ENCODE measurements at regions of chr5 and their contacts with region 1.

Region 1: DNA sequence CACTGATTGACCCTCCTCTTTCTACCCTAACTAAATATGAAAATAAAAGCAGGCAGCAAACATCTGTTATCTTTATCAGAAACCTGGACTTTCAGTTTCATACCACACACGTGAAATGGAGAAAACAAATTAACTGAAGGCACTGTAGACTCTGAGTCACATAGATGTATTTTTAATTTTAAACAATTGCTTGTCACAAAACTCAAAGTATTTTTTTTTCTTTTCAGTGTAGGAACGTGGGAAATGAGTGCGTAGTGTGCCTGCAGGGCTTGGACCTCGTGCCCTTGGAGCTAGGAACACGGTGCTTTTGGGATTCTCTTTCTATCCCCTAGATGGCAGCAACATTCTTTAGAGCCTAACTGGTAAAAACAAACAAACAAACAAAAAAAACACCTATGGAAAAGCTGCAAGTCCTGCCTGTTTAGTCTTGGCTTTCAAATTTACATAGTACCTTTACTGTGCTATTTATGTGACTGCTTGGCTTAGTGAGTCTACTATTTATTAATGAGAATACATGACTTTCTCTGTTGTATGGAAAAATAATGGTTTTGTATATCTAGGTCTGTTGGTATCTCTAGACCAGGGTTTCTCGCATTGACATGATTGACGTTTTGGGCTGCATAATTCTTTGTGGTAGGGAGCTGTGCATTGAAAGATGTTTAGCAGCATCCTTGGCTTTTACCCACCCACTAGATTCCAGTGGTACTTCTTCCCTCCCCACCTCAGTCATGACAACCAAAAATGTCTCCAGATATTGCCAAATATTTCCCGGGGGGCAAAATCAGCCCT is 16.8 kb upstream of the ACTBL2 start:
- DNase-seq: peak; percentile 94
- H3K4me3 ChIP-seq: no peak overlapping the region
- H3K27ac ChIP-seq: no peak overlapping the region
- H3K4me1 ChIP-seq: peaks cover 37% of the 10 kb centered on the region
- H3K27me3 ChIP-seq: no peaks in the 10 kb centered on the region
- CTCF ChIP-seq: peak; percentile 62 to 66
- POLR2A ChIP-seq: no peak

Region 2: GRCh38 chr5:57338068-57338892 is 161.2 kb before region 1 on chr5:
- CTCF ChIA-PET with region 1: interaction called, 10 read pairs
- POLR2A ChIA-PET with region 1: no interaction called
- dilution Hi-C with region 1: no loop called
- intact Hi-C with region 1: loop called (anchors 1 kb)
- DNase-seq: peak; percentile 36
- H3K4me3 ChIP-seq: no peak overlapping the region
- H3K27ac ChIP-seq: no peak overlapping the region
- H3K4me1 ChIP-seq: peaks cover 13% of the 10 kb centered on the region
- H3K27me3 ChIP-seq: no peaks in the 10 kb centered on the region
- CTCF ChIP-seq: peak; percentile 27 to 44
- POLR2A ChIP-seq: no peak

Region 3: DNA sequence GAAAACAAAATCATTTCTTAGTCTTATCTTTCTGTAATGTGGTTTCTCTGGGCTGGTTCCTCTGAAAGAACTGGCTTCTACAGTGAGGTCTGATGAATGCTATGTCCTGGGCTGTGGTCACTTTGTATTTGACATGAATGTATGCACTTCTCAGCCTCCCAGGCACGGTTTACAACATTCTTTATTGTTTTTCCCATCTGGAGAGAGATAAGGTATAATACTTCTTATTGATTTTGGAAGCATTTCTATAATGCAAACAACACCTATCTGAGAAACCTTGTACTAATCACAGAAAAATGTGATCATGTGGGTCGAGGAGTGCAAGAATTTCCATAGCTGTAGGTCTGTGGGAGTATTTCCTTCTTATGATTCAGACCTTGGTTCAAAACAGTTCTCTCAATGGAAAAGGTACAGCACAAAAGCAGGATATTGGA is 63.7 kb before region 1 on chr5:
- CTCF ChIA-PET with region 1: interaction called, 13 read pairs
- POLR2A ChIA-PET with region 1: no interaction called
- dilution Hi-C with region 1: no loop called
- intact Hi-C with region 1: loop called (anchors 1 kb)
- DNase-seq: peak; percentile 99
- H3K4me3 ChIP-seq: no peak overlapping the region
- H3K27ac ChIP-seq: peak overlapping the region; percentile 98
- H3K4me1 ChIP-seq: peaks cover 71% of the 10 kb centered on the region
- H3K27me3 ChIP-seq: no peaks in the 10 kb centered on the region
- CTCF ChIP-seq: no peak
- POLR2A ChIP-seq: peak; percentile 37

Region 4: GRCh38 chr5:57513785-57514184 is 14.3 kb after region 1 on chr5:
- CTCF ChIA-PET with region 1: interaction called, 15 read pairs
- POLR2A ChIA-PET with region 1: no interaction called
- dilution Hi-C with region 1: no loop called
- intact Hi-C with region 1: no loop called
- DNase-seq: no peak
- H3K4me3 ChIP-seq: no peak overlapping the region
- H3K27ac ChIP-seq: no peak overlapping the region
- H3K4me1 ChIP-seq: no peaks in the 10 kb centered on the region
- H3K27me3 ChIP-seq: no peaks in the 10 kb centered on the region
- CTCF ChIP-seq: no peak
- POLR2A ChIP-seq: no peak

Region 5: GRCh38 chr5:57816108-57816507 is 316.7 kb after region 1 on chr5:
- CTCF ChIA-PET with region 1: interaction called, 11 read pairs
- POLR2A ChIA-PET with region 1: no interaction called
- dilution Hi-C with region 1: no loop called
- intact Hi-C with region 1: no loop called
- DNase-seq: peak; percentile 69
- H3K4me3 ChIP-seq: no peak overlapping the region
- H3K27ac ChIP-seq: no peak overlapping the region
- H3K4me1 ChIP-seq: peaks cover 20% of the 10 kb centered on the region
- H3K27me3 ChIP-seq: no peaks in the 10 kb centered on the region
- CTCF ChIP-seq: no peak
- POLR2A ChIP-seq: no peak

Region 6: DNA sequence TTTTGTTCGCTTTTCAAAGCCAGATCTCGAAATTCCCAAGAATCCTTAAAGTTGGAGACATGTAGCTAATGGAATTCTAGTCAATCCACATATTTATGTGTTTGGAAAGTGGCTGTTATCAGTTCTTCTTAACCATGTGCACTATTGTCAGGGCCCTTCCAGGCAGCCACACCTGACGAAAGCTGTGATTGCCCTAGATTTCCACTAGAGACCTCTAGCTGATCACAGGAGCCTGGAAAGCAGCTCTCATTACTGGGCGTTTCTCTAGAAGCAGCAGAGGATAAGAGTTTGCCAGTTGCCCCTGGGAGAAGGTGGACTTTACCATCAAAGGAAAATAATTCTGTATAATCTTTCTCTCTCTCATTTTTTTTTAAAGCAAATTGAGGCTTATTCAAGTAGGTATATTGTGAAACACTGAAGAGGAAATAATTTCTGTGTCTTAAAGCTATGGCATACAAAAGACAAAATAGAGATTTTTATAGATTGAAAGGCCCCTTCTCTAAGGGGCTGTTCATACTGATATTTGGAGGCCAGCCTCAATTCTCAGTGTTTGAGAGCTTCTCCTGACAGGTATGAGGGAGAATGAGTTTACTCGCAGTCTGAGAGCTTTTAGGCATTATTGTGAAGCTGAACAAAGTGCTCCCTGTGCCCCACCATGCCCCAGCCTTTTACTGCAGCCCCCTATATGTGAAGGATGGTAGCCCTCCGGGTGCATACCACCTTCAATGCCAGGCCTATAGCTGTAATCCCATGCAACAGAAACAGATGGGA is 388.6 kb after region 1 on chr5:
- CTCF ChIA-PET with region 1: interaction called, 28 read pairs
- POLR2A ChIA-PET with region 1: no interaction called
- dilution Hi-C with region 1: no loop called
- intact Hi-C with region 1: loop called (anchors 1 kb)
- DNase-seq: peak; percentile 73
- H3K4me3 ChIP-seq: no peak overlapping the region
- H3K27ac ChIP-seq: no peak overlapping the region
- H3K4me1 ChIP-seq: no peaks in the 10 kb centered on the region
- H3K27me3 ChIP-seq: no peaks in the 10 kb centered on the region
- CTCF ChIP-seq: peak; percentile 53 to 66
- POLR2A ChIP-seq: no peak

Measured in endothelial cell of umbilical vein (primary cell).